Head of caudate nucleus (tissue), 42 donors: ENCODE measurements at regions of chr10 and their contacts with region 1.

Region 1: DNA sequence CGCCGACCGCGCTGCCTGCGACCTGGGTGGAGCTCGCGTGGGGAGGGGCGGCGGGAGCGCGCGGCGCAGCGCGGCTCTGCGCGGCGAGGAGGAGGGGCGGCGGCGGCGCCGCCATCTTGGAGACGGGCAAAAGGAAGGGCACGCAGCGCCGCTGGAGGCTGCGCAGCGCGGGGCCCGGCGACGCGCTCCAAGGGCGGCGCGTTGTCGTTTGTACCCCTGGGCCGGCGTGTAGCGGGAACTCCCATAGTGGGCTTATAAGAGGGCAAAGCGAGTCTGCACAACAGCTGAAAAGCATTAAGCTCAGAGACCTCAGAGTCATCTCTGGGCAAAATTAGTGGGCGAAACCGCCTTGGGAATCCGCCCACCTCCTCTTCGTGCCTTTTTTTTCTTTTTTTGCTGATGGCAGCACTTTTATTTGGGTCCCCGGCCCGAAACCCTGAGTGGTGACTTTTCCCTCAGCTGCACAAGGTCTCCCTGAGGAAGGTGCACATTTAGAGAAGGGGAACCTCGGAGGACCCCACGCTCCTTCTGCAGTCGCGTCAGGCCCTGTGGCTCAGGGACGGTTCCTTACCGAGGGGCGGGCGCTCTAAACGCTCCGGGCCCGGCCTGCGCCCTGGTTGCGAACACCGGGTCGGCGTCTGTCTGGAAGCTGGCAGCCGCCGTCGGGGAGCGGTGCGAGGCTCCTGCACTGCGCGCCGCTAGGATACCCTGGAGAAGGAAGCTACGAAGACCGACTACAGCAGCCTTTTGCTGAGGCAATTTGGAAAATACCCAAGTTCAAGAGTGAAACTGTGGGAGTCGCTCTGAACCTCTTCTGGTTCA is 428 bp upstream of the MCMBP start:
- DNase-seq: peak; percentile 65 to 95 (median 89)

Region 2: GRCh38 chr10:119355930-119356329 is 517.1 kb before region 1 on chr10:
- intact Hi-C with region 1: no loop called
- DNase-seq: no peak

Region 3: DNA sequence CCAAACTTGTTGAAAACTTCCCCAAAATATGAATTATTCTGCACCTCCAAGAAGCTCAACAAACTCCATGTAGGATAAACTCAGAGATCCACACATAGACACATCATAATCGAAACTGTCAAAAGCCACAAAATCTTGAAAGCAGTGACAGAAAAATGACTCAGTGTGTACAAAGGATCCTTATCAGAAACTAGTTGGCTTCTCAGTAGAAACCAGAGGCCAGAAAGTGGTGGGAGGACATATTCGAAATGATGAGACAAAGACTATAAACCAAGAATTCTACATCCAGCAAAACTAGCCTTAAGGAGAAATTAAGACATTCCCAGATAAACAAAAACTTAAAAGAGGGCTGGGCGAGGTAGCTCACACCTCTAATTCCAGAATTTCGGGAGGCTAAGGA is 38.9 kb before region 1 on chr10:
- intact Hi-C with region 1: no loop called
- DNase-seq: no peak

Region 4: GRCh38 chr10:119892188-119893065 is 19.4 kb after region 1 on chr10 and contains the start of gene SEC23IP:
- intact Hi-C with region 1: loop called (anchors 1 kb)
- DNase-seq: peak; percentile 96 to 100 (median 99)

Region 5: DNA sequence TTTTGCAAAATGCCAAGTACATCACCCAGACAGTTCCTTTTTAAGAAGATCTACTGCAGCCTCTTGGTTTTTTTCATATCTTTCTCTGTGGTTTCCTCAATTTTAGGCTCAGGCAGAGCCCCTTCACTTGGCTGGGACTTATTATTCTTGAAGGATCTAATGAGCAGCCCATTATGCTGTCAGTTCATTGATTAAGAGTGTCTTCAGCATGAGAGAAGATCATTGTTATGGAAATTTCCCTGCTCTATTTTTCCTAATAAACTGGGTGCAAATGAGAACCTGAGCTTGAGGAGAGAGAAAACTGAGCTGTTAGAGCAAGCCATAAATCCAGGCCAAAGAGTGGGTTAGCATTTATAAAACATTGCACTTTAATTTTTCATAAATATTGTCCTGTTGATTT is 166.0 kb after region 1 on chr10:
- intact Hi-C with region 1: no loop called
- DNase-seq: peak in 2 of 42 donors; percentile 4 to 8

Region 6: GRCh38 chr10:120052964-120053702 is 180.1 kb after region 1 on chr10:
- intact Hi-C with region 1: no loop called
- DNase-seq: no peak